Ascending aorta (tissue), 2 donors: ENCODE measurements at regions of chr10 and their contacts with region 1.

Region 1: GRCh38 chr10:72009411-72010081 is 45.4 kb downstream of the CHST3 start:
- DNase-seq: peak; percentile 93 to 99
- H3K4me3 ChIP-seq: peak overlapping the region in 1 of 2 donors; percentile 16
- H3K27ac ChIP-seq: peak overlapping the region; percentile 93 to 94
- H3K4me1 ChIP-seq: peaks cover 21 to 27% of the 10 kb centered on the region in 2 donors
- H3K27me3 ChIP-seq: no peaks in the 10 kb centered on the region
- CTCF ChIP-seq: no peak

Region 2: GRCh38 chr10:71974489-71975021 is 35.0 kb before region 1 on chr10:
- intact Hi-C with region 1: loop called (anchors 1 kb)
- DNase-seq: peak in 1 of 2 donors; percentile 85
- H3K4me3 ChIP-seq: peak overlapping the region in 1 of 2 donors; percentile 40
- H3K27ac ChIP-seq: peak overlapping the region; percentile 90 to 93
- H3K4me1 ChIP-seq: peaks cover 55 to 78% of the 10 kb centered on the region in 2 donors
- H3K27me3 ChIP-seq: no peaks in the 10 kb centered on the region
- CTCF ChIP-seq: no peak